ENCODE measurements at regions of chr17 and their contacts with region 1.

Region 1: DNA sequence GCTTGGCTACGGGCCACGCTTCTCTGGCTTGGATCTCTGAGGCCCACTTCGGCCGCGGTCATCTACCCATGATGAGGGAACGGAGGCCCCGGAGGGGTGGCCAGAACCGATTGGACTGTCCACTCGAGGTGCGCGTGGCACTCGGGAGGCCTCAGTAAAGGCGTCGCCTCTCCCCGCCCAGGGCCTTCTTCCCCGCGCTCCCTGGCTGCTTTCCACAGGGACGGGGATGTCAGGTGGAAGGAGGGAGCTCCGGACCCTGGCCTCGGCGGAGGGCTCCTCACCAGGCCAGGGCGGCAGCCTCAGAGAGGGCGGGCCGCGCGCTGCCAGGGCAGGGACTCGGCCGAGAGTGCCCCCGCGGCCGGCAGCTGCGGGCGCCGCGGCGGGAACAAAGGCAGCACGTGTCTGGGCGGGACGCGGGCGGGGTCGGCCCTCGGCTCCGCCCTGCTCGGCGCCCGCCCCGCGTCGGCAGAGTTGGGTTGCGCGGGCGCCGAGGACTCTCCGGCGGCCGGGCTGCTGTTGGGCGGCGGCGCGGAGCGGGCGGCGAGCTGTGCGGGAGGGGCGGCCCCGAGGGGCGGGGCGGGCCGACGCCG is 587 bp upstream of the CDK5R1 start:
- DNase-seq: peak; percentile 58
- H3K4me3 Mint-ChIP-seq: peak overlapping the region; percentile 76
- H3K27ac Mint-ChIP-seq: peak overlapping the region; percentile 22
- H3K4me1 Mint-ChIP-seq: peaks cover 31% of the 10 kb centered on the region
- H3K27me3 Mint-ChIP-seq: no peaks in the 10 kb centered on the region

Region 2: GRCh38 chr17:32206861-32207260 is 279.3 kb before region 1 on chr17:
- intact Hi-C with region 1: no loop called
- DNase-seq: no peak
- H3K4me3 Mint-ChIP-seq: no peak overlapping the region
- H3K27ac Mint-ChIP-seq: no peak overlapping the region
- H3K4me1 Mint-ChIP-seq: peaks cover 2% of the 10 kb centered on the region
- H3K27me3 Mint-ChIP-seq: no peaks in the 10 kb centered on the region

Region 3: GRCh38 chr17:32349854-32350665 is 136.1 kb before region 1 on chr17 and contains the start of gene ZNF207:
- intact Hi-C with region 1: loop called (anchors 5 kb)
- DNase-seq: peak; percentile 95
- H3K4me3 Mint-ChIP-seq: peak within 1 kb of the TSS; percentile 92
- H3K27ac Mint-ChIP-seq: peak within 1 kb of the TSS; percentile 99
- H3K4me1 Mint-ChIP-seq: peaks cover 25% of the 10 kb centered on the region
- H3K27me3 Mint-ChIP-seq: no peaks in the 10 kb centered on the region
- total RNA-seq, gene ZNF207: 254 and 256 TPM in 2 replicates

Region 4: GRCh38 chr17:32386844-32387243 is 99.4 kb before region 1 on chr17:
- intact Hi-C with region 1: no loop called
- DNase-seq: no peak
- H3K4me3 Mint-ChIP-seq: no peak overlapping the region
- H3K27ac Mint-ChIP-seq: no peak overlapping the region
- H3K4me1 Mint-ChIP-seq: peaks cover 3% of the 10 kb centered on the region
- H3K27me3 Mint-ChIP-seq: no peaks in the 10 kb centered on the region

Region 5: GRCh38 chr17:32444308-32445073 is 41.7 kb before region 1 on chr17 and contains the start of gene PSMD11:
- intact Hi-C with region 1: loop called (anchors 2 kb)
- DNase-seq: peak; percentile 98
- H3K4me3 Mint-ChIP-seq: peak within 1 kb of the TSS; percentile 91
- H3K27ac Mint-ChIP-seq: peak within 1 kb of the TSS; percentile 78
- H3K4me1 Mint-ChIP-seq: peaks cover 39% of the 10 kb centered on the region
- H3K27me3 Mint-ChIP-seq: peaks cover 5% of the 10 kb centered on the region
- total RNA-seq, gene PSMD11: 200 and 207 TPM in 2 replicates

Region 6: DNA sequence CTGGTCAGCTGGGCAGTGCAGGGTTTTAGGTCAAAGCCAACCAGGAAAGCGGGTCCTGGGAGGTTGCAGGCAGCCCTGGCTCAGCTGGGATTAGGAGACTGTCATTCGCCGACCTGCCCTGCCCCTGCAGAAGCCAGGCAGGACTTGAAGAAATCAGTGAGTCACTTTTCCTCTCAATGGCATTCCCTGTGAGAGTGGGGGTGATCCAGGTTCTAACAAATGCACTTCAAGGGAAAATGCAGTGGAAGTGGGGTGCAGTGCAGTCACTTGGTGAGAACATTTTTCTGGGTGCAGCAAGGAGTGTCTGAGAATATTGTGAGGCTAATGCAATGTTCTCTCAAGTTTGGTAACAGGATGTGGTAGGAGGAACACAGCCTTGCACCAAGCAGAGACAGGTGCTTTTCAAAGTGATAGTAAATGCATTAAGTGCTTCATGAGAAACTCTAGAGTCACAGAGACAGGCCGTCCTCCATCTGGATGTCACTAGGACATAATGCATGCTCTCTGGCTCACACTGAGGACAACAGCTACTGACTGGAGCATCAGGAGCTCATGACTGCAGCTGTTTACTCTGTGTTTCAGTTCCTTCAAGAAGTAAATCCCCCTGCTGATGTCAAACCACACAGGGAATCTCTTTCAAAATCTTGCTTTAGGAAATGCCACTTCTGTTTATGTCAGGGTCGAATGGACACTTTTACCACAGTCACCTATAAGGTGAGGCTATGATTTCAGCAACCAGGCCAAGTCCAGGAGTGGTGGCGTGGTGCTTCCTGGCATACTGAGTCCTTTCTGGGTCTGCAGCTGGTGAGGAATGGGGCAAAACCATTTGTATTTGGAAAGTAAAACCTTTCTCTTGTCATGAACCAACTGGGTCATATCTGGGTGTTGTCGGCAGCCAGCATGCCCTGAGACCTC is 17.3 kb after region 1 on chr17:
- intact Hi-C with region 1: loop called (anchors 1 kb)
- DNase-seq: peak; percentile 55
- H3K4me3 Mint-ChIP-seq: peak overlapping the region; percentile 43
- H3K27ac Mint-ChIP-seq: peak overlapping the region; percentile 95
- H3K4me1 Mint-ChIP-seq: peaks cover 50% of the 10 kb centered on the region
- H3K27me3 Mint-ChIP-seq: no peaks in the 10 kb centered on the region

Region 7: GRCh38 chr17:32551186-32551955 is 65.2 kb after region 1 on chr17:
- intact Hi-C with region 1: loop called (anchors 10 kb)
- DNase-seq: no peak
- H3K4me3 Mint-ChIP-seq: no peak overlapping the region
- H3K27ac Mint-ChIP-seq: peak overlapping the region; percentile 55
- H3K4me1 Mint-ChIP-seq: peaks cover 47% of the 10 kb centered on the region
- H3K27me3 Mint-ChIP-seq: no peaks in the 10 kb centered on the region

Region 8: GRCh38 chr17:32609085-32609484 is 122.9 kb after region 1 on chr17:
- intact Hi-C with region 1: loop called (anchors 1 kb)
- DNase-seq: peak; percentile 51
- H3K4me3 Mint-ChIP-seq: no peak overlapping the region
- H3K27ac Mint-ChIP-seq: no peak overlapping the region
- H3K4me1 Mint-ChIP-seq: peaks cover 8% of the 10 kb centered on the region
- H3K27me3 Mint-ChIP-seq: peaks cover 1% of the 10 kb centered on the region

Region 9: DNA sequence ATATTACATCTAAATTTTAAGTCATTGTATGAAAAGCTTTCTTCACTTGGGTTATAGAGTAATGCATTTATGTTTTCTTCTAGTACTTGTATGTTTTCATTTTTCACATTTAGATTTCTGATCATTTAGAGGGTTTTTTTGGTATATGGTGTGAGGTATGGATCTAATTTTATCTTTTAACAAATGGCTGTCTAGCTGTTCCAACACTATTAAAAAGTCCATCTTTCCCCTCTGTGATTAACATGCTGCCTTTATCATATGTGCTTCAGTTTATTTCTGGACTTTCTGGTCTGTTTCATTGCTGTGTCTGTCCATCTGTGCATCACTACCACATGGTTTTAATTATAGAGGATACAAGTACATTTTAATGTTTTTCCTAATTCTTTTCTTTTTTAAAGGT is 226.9 kb after region 1 on chr17:
- intact Hi-C with region 1: no loop called
- DNase-seq: no peak
- H3K4me3 Mint-ChIP-seq: no peak overlapping the region
- H3K27ac Mint-ChIP-seq: no peak overlapping the region
- H3K4me1 Mint-ChIP-seq: peaks cover 4% of the 10 kb centered on the region
- H3K27me3 Mint-ChIP-seq: no peaks in the 10 kb centered on the region

Region 10: GRCh38 chr17:32755045-32755805 is 269.0 kb after region 1 on chr17:
- intact Hi-C with region 1: loop called (anchors 5 kb)
- DNase-seq: no peak
- H3K4me3 Mint-ChIP-seq: no peak overlapping the region
- H3K27ac Mint-ChIP-seq: no peak overlapping the region
- H3K4me1 Mint-ChIP-seq: peaks cover 23% of the 10 kb centered on the region
- H3K27me3 Mint-ChIP-seq: no peaks in the 10 kb centered on the region